Activated CD4-positive, alpha-beta memory T cell treated with anti-CD3 and anti-CD28 coated beads for 36 hours (primary cell): ENCODE measurements at regions of chr1 and their contacts with region 1.

Region 1: DNA sequence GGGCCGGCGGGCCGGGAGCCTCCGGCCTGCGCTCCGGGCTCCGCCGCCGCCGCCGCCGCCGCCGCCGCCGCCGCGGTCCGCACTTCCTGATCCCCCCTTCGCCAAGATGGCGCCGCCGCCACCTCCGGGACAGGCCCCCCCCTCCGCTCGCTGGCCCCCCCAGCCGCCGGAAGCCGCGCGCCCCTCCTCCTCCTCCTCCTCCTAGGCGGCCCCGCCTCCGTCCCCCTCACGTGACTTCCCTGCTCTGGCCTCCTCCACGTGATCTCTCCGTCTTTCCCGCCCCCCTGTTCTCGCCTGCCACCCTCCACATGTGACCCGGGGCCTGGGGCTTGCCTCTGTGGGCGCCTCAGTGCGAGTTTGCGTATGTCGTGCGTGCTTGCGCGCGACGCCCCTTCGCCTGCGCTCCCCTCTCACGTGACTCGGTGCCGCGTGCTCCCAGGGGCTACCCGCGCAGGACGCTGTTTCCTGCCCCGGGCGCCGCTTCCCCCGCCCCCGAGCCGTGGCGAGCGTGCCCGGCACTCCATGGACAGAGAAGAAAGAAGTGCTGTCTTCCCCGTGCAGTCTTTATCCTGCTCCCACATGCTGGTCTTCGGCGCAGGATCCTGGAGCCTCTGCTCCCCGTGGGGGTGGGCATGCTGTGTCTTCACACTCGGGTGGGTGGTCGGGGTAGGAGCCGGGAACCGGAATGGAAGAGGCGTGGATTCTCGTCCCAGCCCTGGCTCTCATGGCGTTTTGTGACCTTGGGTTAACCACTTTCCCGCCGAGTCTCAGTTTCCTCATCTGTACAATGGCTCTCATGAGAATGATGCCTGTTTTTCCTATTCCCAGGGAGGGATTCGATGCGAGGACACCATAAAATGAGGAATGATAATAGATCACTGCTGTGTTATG is at the start of gene UBE2Q1:
- DNase-seq: peak; percentile 100
- H3K4me3 Mint-ChIP-seq: peak within 1 kb of the TSS; percentile 90
- H3K27ac Mint-ChIP-seq: peak within 1 kb of the TSS; percentile 94
- H3K4me1 Mint-ChIP-seq: peaks cover 26% of the 10 kb centered on the region
- H3K27me3 Mint-ChIP-seq: no peaks in the 10 kb centered on the region
- total RNA-seq, gene UBE2Q1: 82.5 to 86.2 TPM

Region 2: GRCh38 chr1:154352581-154353459 is 206.0 kb before region 1 on chr1:
- CTCF ChIA-PET with region 1: no interaction called
- POLR2A ChIA-PET with region 1: no interaction called
- intact Hi-C with region 1: loop called (anchors 5 kb)
- DNase-seq: peak; percentile 81
- H3K4me3 Mint-ChIP-seq: peak overlapping the region; percentile 72
- H3K27ac Mint-ChIP-seq: peak overlapping the region; percentile 82
- H3K4me1 Mint-ChIP-seq: peaks cover 41% of the 10 kb centered on the region
- H3K27me3 Mint-ChIP-seq: no peaks in the 10 kb centered on the region

Region 3: GRCh38 chr1:154546264-154547063 is 12.4 kb before region 1 on chr1:
- CTCF ChIA-PET with region 1: interaction called, 12 read pairs
- POLR2A ChIA-PET with region 1: no interaction called
- intact Hi-C with region 1: no loop called
- DNase-seq: peak; percentile 74
- H3K4me3 Mint-ChIP-seq: no peak overlapping the region
- H3K27ac Mint-ChIP-seq: peak overlapping the region; percentile 19
- H3K4me1 Mint-ChIP-seq: peaks cover 20% of the 10 kb centered on the region
- H3K27me3 Mint-ChIP-seq: no peaks in the 10 kb centered on the region

Region 4: DNA sequence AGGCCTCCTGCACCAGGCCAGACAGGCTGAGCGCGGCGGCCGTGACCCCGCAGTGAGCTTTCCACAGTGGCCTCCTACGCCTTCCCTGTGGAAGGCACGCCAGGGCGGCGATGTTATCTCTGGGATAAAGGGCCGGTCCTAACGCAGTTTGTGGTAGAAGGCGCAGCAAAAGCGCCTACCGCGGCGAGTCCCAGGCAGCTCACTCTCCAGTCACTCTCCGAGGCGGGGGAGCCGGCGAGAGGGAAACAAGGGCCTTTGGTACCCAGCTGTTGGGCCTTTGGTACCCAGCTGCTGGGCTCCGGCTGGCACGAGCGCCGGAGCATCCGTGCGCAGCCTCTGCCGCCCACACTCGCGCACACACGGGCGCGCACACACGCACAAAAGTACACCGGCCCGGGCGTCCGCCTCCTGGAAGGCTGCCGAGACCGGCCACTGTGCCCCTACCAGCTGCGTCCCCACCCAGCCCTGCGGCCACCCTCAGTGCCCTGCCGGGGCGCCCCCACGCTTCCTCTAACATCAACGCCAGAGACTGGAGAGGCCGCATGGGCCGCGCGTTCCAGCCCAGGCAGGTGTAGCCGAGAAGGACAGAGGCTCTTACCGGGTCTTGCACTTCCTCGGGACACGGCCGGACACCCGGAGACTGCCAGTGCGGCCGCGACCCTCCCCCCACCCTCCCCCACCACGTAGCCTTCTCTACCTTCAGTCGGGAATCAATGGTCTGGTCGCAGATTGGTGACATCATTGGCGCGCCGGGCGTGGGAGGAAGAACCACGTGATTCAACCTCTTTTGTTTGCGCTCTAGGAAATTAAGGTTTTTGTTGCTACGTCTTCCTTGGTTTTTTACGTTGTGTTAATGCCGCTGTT is 68.7 kb after region 1 on chr1:
- CTCF ChIA-PET with region 1: interaction called, 17 read pairs
- POLR2A ChIA-PET with region 1: interaction called, 3 read pairs
- intact Hi-C with region 1: loop called (anchors 2 kb)
- DNase-seq: peak; percentile 96
- H3K4me3 Mint-ChIP-seq: peak overlapping the region; percentile 93
- H3K27ac Mint-ChIP-seq: peak overlapping the region; percentile 97
- H3K4me1 Mint-ChIP-seq: peaks cover 42% of the 10 kb centered on the region
- H3K27me3 Mint-ChIP-seq: peaks cover 3% of the 10 kb centered on the region

Region 5: GRCh38 chr1:154747740-154748404 is 189.1 kb after region 1 on chr1:
- CTCF ChIA-PET with region 1: interaction called, 15 read pairs
- POLR2A ChIA-PET with region 1: no interaction called
- intact Hi-C with region 1: loop called (anchors 1 kb)
- DNase-seq: peak; percentile 78
- H3K4me3 Mint-ChIP-seq: peak overlapping the region; percentile 58
- H3K27ac Mint-ChIP-seq: peak overlapping the region; percentile 83
- H3K4me1 Mint-ChIP-seq: peaks cover 68% of the 10 kb centered on the region
- H3K27me3 Mint-ChIP-seq: no peaks in the 10 kb centered on the region

Region 6: GRCh38 chr1:154878371-154879022 is 319.7 kb after region 1 on chr1:
- CTCF ChIA-PET with region 1: interaction called, 39 read pairs
- POLR2A ChIA-PET with region 1: interaction called, 3 read pairs
- intact Hi-C with region 1: loop called (anchors 1 kb)
- DNase-seq: peak; percentile 84
- H3K4me3 Mint-ChIP-seq: no peak overlapping the region
- H3K27ac Mint-ChIP-seq: no peak overlapping the region
- H3K4me1 Mint-ChIP-seq: peaks cover 14% of the 10 kb centered on the region
- H3K27me3 Mint-ChIP-seq: peaks cover 3% of the 10 kb centered on the region

Region 7: GRCh38 chr1:155001675-155002463 is 443.0 kb after region 1 on chr1:
- CTCF ChIA-PET with region 1: interaction called, 10 read pairs
- POLR2A ChIA-PET with region 1: no interaction called
- intact Hi-C with region 1: loop called (anchors 2 kb)
- DNase-seq: peak; percentile 100
- H3K4me3 Mint-ChIP-seq: peak overlapping the region; percentile 94
- H3K27ac Mint-ChIP-seq: peak overlapping the region; percentile 95
- H3K4me1 Mint-ChIP-seq: peaks cover 50% of the 10 kb centered on the region
- H3K27me3 Mint-ChIP-seq: no peaks in the 10 kb centered on the region